ENCODE measurements at regions of chr5 and their contacts with region 1.

Region 1: DNA sequence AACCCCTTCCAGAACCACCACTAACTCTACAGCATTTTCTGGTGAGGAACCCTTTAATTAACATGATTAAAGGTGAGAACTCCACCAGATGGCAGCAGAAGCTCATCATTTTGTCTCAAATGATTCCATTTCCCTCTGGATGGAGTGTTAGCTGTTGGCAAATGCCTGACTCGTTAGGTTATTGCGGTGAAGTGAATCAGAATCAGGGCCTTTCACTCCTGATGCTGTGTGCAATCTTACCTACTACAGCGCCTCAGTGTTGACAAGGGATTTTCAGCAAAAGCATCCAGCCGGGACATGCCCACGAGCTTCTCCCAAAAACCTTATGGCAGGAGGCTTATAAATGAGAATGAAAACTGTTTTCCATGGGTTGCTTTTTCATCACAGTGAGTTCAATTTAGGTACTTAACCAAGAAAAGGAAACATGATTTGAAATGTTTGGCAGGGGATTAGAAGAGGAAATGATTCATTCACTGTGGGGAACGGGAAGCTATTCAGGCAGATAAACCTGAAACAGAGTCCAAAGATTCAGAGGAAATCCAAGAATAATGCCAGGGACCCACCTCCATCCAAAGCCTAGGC is 48.0 kb upstream of the CAST start:
- DNase-seq: peak; percentile 65
- ATAC-seq: peak; percentile 39
- H3K4me3 Mint-ChIP-seq: no peak overlapping the region
- H3K27ac Mint-ChIP-seq: no peak overlapping the region
- H3K4me1 Mint-ChIP-seq: peaks cover 5% of the 10 kb centered on the region
- H3K27me3 Mint-ChIP-seq: peaks cover 37% of the 10 kb centered on the region

Region 2: GRCh38 chr5:96483878-96484277 is 130.3 kb before region 1 on chr5:
- CTCF ChIA-PET with region 1: no interaction called
- POLR2A ChIA-PET with region 1: no interaction called
- DNase-seq: peak; percentile 37
- ATAC-seq: no peak
- H3K4me3 Mint-ChIP-seq: no peak overlapping the region
- H3K27ac Mint-ChIP-seq: no peak overlapping the region
- H3K4me1 Mint-ChIP-seq: no peaks in the 10 kb centered on the region
- H3K27me3 Mint-ChIP-seq: peaks cover 6% of the 10 kb centered on the region

Region 3: GRCh38 chr5:96601811-96602244 is 12.4 kb before region 1 on chr5:
- CTCF ChIA-PET with region 1: interaction called, 42 read pairs
- POLR2A ChIA-PET with region 1: no interaction called
- DNase-seq: peak; percentile 74
- ATAC-seq: peak; percentile 79
- H3K4me3 Mint-ChIP-seq: no peak overlapping the region
- H3K27ac Mint-ChIP-seq: no peak overlapping the region
- H3K4me1 Mint-ChIP-seq: no peaks in the 10 kb centered on the region
- H3K27me3 Mint-ChIP-seq: peaks cover 8% of the 10 kb centered on the region

Region 4: DNA sequence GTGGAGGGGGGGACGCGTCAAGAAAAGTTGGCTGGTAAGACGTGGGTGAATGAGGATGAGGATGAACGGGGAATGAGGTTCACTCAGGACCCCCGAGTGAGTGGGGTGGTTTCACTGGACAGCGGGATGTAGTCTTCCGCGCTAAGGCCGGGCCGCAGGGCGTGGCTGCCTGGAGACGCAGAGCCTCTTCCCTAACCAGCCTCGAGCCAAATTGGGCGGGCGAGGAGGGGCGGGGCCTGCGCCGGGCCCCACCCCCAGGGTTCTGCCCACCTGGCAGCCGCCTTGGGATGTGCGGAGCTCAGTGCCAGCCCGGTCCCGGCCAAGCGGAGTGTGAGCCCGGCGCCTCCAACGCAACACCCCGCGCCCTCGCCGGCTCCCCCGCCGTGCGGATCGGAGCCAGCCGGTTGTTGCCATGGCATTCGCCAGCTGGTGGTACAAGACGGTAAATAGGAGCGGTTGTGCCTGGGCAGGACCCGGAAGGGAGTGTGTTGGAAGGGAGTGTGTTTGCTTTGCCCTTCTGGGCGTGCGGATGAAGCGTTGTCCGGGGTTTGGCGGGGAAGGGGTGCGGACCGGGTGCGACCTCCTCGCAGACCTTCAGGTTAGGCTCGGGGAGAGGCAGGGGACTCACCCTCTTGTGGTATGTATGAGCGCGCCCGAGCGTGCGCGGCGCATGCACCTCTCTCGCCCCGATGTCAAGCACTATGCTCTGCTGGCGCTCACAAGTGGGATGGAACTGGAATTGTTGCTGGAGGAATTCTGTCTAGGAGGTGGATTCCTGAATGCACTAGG is 48.7 kb after region 1 on chr5:
- CTCF ChIA-PET with region 1: interaction called, 13 read pairs
- POLR2A ChIA-PET with region 1: interaction called, 6 read pairs
- DNase-seq: peak; percentile 89
- ATAC-seq: peak; percentile 85
- H3K4me3 Mint-ChIP-seq: peak overlapping the region; percentile 92
- H3K27ac Mint-ChIP-seq: peak overlapping the region; percentile 92
- H3K4me1 Mint-ChIP-seq: peaks cover 55% of the 10 kb centered on the region
- H3K27me3 Mint-ChIP-seq: peaks cover 11% of the 10 kb centered on the region

Region 5: DNA sequence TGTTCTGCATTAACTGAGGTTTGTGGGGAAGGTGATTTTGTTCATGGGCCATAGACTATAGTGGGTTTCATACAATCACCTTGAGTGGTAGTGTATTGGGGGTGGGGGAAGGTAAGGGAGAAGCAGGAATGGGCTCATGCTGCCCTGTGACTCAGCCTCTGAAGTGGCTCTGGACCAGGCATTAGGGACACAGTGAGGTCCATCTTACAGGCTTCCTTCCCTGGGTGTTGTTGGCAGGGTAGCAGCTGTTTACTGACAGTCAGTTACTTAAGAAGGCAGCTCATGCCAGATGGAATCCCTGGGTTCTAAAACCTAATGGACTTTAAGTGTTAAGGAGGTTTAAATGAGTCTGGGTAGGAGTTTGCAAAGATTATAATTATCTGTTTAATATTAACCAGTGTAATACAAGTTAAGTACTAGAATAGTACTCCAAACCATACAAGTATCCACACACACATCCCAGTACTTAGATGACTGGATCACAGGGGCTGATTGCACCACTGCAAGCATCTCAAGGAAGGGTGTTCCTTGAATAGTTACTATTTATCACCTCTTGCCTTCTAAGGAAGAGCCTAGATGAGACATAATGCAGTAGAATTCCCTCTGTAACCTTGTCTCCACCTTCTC is 107.3 kb after region 1 on chr5:
- CTCF ChIA-PET with region 1: interaction called, 11 read pairs
- POLR2A ChIA-PET with region 1: no interaction called
- DNase-seq: no peak
- ATAC-seq: no peak
- H3K4me3 Mint-ChIP-seq: no peak overlapping the region
- H3K27ac Mint-ChIP-seq: no peak overlapping the region
- H3K4me1 Mint-ChIP-seq: peaks cover 11% of the 10 kb centered on the region
- H3K27me3 Mint-ChIP-seq: no peaks in the 10 kb centered on the region

Region 6: DNA sequence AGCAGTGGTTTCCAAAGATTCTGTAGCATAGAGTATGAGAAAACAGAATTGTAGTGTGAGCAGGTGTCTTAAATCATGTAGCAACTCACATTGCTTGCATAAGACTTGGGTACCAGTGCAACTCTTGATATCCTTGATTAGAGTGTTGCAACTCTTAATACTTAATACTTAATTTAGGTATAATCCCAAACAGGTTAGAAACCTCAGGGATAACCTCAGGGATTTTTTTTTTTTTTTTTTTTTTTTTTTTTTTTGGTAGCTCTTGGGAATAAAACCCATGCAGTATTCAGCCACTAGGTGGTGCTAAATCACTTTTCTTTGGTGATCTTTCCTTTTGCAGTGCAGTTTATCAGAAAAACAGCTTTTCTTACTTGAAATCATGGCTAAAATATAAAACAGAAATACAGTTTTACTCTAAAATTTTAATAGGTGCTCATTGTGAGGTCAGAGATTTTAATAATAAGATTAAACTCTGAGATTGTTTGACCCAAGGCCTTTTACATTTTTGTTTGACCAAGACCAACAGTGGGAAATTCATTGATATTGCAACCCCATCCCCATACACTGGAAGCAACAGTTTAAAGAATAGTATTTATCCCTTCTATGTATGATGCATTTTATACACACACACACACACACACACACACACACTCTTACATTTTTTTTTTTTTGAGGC is 138.3 kb after region 1 on chr5:
- CTCF ChIA-PET with region 1: interaction called, 15 read pairs
- POLR2A ChIA-PET with region 1: no interaction called
- DNase-seq: peak; percentile 67
- ATAC-seq: no peak
- H3K4me3 Mint-ChIP-seq: no peak overlapping the region
- H3K27ac Mint-ChIP-seq: no peak overlapping the region
- H3K4me1 Mint-ChIP-seq: no peaks in the 10 kb centered on the region
- H3K27me3 Mint-ChIP-seq: no peaks in the 10 kb centered on the region